Pancreas (tissue), 10 donors: ENCODE measurements at regions of chr2 and their contacts with region 1.

Region 1: DNA sequence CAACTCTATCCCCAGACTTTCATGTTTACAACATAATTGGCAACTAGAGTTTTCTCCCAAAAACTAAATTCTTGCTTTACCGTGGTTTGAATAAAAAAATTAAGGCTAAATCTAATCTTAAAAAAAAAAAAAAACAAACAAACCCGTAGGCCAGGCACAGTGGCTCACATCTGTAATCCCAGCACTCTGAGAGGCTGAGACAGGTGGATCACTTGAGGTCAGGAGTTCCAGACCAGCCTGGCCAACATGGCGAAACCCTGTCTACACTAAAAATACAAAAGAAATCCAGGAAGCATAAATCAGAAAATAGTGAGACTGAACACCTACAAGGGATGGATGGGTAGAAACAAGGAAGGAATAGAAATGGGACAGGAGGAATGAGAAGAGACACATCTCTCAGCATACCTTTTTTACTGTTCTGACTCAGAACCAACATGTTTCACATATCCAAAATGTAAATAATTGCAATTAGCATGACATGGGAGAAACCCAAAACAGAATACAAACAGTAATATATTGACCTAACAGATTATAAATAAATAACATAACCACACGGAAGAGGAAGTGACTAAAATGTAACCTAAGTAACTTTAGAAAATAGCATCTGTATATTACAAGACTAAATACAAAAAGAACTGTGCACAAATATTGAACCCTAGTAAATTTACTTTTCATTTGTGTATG is 17.5 kb downstream of the MGAT4A start:
- DNase-seq: no peak
- ATAC-seq: no peak
- H3K4me3 ChIP-seq: no peak overlapping the region
- H3K27ac ChIP-seq: peak overlapping the region in 1 of 4 donors; percentile 14
- H3K4me1 ChIP-seq: peaks cover 31 to 40% (median 32%) of the 10 kb centered on the region in 3 donors
- H3K27me3 ChIP-seq: no peaks in the 10 kb centered on the region
- CTCF ChIP-seq: no peak

Region 2: GRCh38 chr2:98412751-98413458 is 300.6 kb before region 1 on chr2:
- intact Hi-C with region 1: no loop called
- DNase-seq: peak in 2 of 6 donors; percentile 29 to 32
- ATAC-seq: peak; percentile 67 to 95 (median 87)
- H3K4me3 ChIP-seq: no peak overlapping the region
- H3K27ac ChIP-seq: no peak overlapping the region
- H3K4me1 ChIP-seq: no peaks in the 10 kb centered on the region
- H3K27me3 ChIP-seq: no peaks in the 10 kb centered on the region
- CTCF ChIP-seq: peak; percentile 22 to 53 (median 48)

Region 3: GRCh38 chr2:98654699-98655495 is 58.6 kb before region 1 on chr2:
- intact Hi-C with region 1: loop called in 2 of 3 experiments (anchors 5 to 10 kb)
- DNase-seq: no peak
- ATAC-seq: peak in 2 of 4 donors; percentile 52 to 59
- H3K4me3 ChIP-seq: no peak overlapping the region
- H3K27ac ChIP-seq: no peak overlapping the region
- H3K4me1 ChIP-seq: peaks cover under 1 to 9% (median 8%) of the 10 kb centered on the region in 3 donors
- H3K27me3 ChIP-seq: no peaks in the 10 kb centered on the region
- CTCF ChIP-seq: no peak

Region 4: GRCh38 chr2:98664327-98664726 is 49.1 kb before region 1 on chr2:
- intact Hi-C with region 1: loop called in 2 of 3 experiments (anchors 5 to 10 kb)
- DNase-seq: no peak
- ATAC-seq: peak; percentile 27 to 70 (median 65)
- H3K4me3 ChIP-seq: no peak overlapping the region
- H3K27ac ChIP-seq: no peak overlapping the region
- H3K4me1 ChIP-seq: peaks cover 0 to under 1% (median 0%) of the 10 kb centered on the region in 3 donors
- H3K27me3 ChIP-seq: no peaks in the 10 kb centered on the region
- CTCF ChIP-seq: no peak

Region 5: GRCh38 chr2:98757904-98758421 is 44.5 kb after region 1 on chr2:
- intact Hi-C with region 1: no loop called
- DNase-seq: peak in 5 of 6 donors; percentile 61 to 77 (median 69)
- ATAC-seq: peak; percentile 81 to 93 (median 84)
- H3K4me3 ChIP-seq: no peak overlapping the region
- H3K27ac ChIP-seq: peak overlapping the region; percentile 27 to 79 (median 50)
- H3K4me1 ChIP-seq: peaks cover 0 to 26% (median 12%) of the 10 kb centered on the region in 3 donors
- H3K27me3 ChIP-seq: no peaks in the 10 kb centered on the region
- CTCF ChIP-seq: no peak

Region 6: DNA sequence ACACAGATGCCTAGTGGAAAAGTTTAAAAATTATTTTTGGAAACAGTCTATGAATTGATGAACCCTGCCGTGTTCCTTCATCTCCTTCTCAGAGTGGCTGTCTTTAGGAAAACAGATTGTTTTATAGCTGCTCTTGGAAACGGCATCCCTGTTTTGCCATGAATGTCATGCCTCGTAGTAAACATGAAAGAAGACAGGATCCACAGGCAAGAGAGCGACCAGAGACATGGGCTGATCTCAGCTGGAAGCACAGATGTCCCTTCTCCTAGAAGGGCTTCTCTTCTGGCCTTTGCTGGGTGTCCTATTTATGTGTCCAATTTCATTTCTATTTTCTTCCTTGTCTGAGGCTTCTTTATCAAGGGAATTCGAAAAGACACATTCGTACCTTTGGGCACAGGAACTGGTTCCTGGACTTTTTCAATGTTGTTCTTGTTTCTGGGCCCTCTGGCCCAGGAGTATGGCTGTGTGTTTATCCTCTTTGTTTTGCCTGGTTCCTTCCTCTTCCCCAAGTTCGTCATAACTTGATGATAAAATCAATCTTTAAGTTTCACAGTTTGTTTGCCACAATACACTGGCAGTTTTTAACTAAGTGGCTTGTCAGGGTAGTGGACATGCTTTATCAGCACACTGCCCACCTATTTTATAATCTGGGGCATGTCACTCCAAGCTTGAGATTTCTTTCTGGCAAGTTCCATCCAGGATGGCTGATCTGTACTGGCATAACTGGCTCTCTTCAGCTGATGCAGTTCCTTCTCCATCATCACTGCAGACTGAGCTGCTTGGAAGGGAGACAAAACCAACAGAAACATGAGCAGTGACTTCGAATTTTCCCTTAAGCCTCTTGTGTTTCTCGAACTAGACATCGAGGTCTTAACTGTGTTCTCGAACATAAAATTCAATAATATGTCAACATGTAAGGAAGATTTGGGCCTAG is 80.7 kb after region 1 on chr2:
- intact Hi-C with region 1: no loop called
- DNase-seq: no peak
- ATAC-seq: no peak
- H3K4me3 ChIP-seq: no peak overlapping the region
- H3K27ac ChIP-seq: peak overlapping the region in 2 of 4 donors; percentile 39 to 42
- H3K4me1 ChIP-seq: no peaks in the 10 kb centered on the region
- H3K27me3 ChIP-seq: no peaks in the 10 kb centered on the region
- CTCF ChIP-seq: no peak

Region 7: DNA sequence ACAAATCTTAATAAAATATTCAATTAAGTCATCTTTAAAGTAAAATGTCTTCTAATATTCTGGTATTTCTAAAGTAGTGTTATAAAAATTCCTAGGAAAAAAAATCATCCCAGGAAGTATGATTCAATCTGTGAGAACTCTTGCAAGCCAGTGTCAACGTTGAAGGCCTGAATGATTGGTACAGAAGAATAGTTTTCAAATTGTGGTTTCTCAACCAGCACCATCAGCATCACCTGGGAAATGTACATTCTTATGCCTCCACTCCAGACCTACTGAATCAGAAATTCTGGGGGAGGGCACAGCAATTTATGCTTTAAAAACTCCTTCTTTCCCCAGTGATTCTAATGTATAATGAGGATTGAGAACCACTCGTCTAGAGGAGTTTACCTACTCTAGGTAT is 365.8 kb after region 1 on chr2:
- intact Hi-C with region 1: no loop called
- DNase-seq: no peak
- ATAC-seq: no peak
- H3K4me3 ChIP-seq: no peak overlapping the region
- H3K27ac ChIP-seq: no peak overlapping the region
- H3K4me1 ChIP-seq: no peaks in the 10 kb centered on the region
- H3K27me3 ChIP-seq: no peaks in the 10 kb centered on the region
- CTCF ChIP-seq: no peak